ENCODE measurements at regions of chr5 and their contacts with region 1.

Region 1: GRCh38 chr5:42718591-42718990 is 38.0 kb upstream of the CCDC152 start:
- DNase-seq: no peak
- H3K4me3 ChIP-seq: no peak overlapping the region
- H3K27ac ChIP-seq: no peak overlapping the region
- H3K4me1 ChIP-seq: no peaks in the 10 kb centered on the region
- H3K27me3 ChIP-seq: no peaks in the 10 kb centered on the region
- CTCF ChIP-seq: no peak
- POLR2A ChIP-seq: no peak

Region 2: DNA sequence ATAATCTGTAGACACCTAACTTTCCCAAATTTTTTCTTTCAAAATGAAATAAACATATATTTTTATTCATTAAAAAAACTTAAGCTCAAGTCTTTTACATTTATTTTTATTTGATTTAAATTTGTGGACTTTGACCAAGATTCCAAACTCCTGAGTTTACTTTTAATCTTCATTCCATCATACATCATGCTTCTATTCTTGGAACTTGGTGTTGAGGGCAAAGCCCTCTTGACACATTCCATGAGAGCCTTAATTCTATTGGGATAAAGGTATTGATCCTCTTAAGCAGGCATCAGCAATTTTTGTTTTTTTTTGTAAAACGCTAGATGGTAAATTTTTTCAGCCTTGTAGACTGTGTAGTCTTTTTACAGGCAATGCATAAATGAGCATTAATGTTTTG is 739.9 kb before region 1 on chr5:
- intact Hi-C with region 1: loop called (anchors 5 kb)
- DNase-seq: no peak
- H3K4me3 ChIP-seq: no peak overlapping the region
- H3K27ac ChIP-seq: no peak overlapping the region
- H3K4me1 ChIP-seq: no peaks in the 10 kb centered on the region
- H3K27me3 ChIP-seq: no peaks in the 10 kb centered on the region
- CTCF ChIP-seq: no peak
- POLR2A ChIP-seq: no peak

Measured in breast epithelium (tissue), 4 donors.